Sigmoid colon (tissue), 7 donors: ENCODE measurements at regions of chr13 and their contacts with region 1.

Region 1: DNA sequence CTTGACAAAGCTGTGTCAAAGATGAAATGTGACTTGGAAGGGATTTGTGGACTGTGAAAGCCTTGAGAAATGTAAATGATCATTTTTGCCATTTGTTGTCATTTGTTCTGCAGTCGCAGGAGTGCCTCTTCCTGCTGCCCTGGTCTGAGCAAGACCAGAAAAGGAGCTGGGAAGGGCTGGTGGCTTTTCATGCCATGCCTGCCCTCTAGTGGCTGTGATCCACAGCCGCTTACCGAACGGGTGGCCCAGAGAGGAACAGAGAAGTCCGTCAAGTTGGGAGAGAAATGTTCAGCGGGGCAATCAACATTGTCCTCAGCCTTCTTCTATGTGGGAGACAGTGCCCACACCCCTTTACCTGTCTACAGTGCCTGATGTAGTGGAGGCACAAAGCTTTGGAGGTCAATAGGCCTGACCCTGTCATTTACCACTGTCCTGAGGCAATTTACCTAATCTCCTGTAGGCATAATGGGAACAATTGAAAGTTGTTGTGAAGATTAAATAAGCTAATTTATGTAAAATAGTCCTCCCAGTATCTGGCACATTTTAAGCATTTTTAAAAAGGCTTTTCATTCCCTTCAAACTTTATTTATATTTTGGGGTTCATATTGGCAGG is 224.4 kb downstream of the B3GLCT start:
- DNase-seq: peak; percentile 84
- H3K4me3 ChIP-seq: no peak overlapping the region
- H3K27ac ChIP-seq: no peak overlapping the region
- H3K4me1 ChIP-seq: no peaks in the 10 kb centered on the region
- H3K27me3 ChIP-seq: no peaks in the 10 kb centered on the region
- CTCF ChIP-seq: peak; percentile 37 to 77 (median 64)
- EP300 ChIP-seq: no peak
- POLR2A ChIP-seq: no peak

Region 2: GRCh38 chr13:31199849-31200636 is 224.2 kb before region 1 on chr13 and contains the start of gene B3GLCT:
- intact Hi-C with region 1: loop called (anchors 10 kb)
- DNase-seq: peak; percentile 85
- H3K4me3 ChIP-seq: peak within 1 kb of the TSS; percentile 57 to 88 (median 80)
- H3K27ac ChIP-seq: peak within 1 kb of the TSS; percentile 91 to 99 (median 96)
- H3K4me1 ChIP-seq: peaks cover 0 to 16% (median 10%) of the 10 kb centered on the region in 4 donors
- H3K27me3 ChIP-seq: no peaks in the 10 kb centered on the region
- CTCF ChIP-seq: peak in 2 of 4 experiments; percentile 66 to 91
- EP300 ChIP-seq: no peak
- POLR2A ChIP-seq: no peak
- total RNA-seq, gene B3GLCT: 5.8 to 7.5 (median 6.8) TPM

Region 3: DNA sequence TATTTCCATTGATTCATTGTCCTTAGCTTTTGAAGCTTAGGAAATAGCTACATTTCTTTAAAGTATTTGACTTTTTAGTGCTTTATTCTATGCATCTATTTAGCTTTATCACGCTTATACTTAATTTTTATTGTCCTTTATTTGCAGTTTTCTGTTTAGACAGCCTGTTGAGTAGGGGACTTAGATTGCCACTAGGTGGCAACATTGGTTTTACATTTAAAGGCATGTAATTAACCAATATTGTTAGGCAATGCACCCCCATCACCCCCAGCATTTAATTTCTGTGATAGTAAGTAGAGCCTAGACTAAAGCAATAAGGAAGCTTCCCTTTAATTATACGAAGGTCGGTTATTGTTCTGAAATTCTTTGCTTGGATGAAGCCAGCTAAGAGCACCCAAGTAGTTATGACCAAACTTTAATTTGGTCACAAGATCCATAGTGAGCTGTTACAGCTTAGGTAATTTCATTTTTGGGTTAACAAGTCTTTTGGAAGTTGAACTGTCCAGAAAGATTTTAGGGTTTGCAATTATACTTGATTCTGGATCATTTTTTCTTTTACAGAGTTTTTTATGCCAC is 187.9 kb before region 1 on chr13:
- intact Hi-C with region 1: loop called (anchors 5 kb)
- DNase-seq: no peak
- H3K4me3 ChIP-seq: no peak overlapping the region
- H3K27ac ChIP-seq: no peak overlapping the region
- H3K4me1 ChIP-seq: no peaks in the 10 kb centered on the region
- H3K27me3 ChIP-seq: no peaks in the 10 kb centered on the region
- CTCF ChIP-seq: peak in 3 of 4 experiments; percentile 43 to 58 (median 47)
- EP300 ChIP-seq: no peak
- POLR2A ChIP-seq: no peak